ENCODE measurements at regions of chr15 and their contacts with region 1.

Region 1: DNA sequence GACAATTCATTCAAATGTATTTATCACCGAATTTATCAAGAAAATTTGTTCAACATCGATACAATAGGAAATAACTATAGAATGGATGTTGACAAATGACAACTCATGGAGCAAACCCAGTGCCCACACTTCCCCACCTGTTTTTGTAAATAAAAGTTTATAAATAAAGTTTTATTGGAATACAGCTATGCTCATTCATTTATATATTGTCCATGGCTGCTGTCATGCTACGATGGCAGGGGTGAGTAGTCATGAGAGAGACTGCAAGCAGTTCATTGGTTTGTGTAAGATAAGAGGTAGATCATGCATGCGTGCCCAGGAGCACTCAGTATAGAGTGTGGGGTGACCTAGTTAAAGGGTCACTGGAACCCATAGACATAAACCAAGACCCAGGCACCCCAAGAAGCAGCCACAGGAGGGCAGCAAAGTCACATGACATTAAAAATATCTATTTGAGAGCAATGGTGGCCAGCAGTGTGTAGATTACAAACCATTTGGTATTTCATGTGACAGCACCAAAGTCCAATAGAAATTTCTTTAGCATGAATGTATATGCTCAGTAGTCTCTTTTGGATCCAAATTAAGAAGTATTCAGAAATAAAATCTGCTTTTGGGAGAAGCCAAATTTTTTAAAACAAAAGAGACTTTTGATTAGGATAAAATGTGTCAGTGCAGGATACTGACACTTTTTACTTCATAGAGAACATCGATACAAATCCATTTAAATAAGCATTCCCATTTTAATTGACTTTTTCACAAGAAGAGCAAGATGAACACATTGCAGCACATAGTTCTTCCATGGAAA is 794.8 kb downstream of the MCTP2 start:
- DNase-seq: peak; percentile 50
- H3K4me3 ChIP-seq: no peak overlapping the region
- H3K27ac ChIP-seq: no peak overlapping the region
- H3K4me1 ChIP-seq: no peaks in the 10 kb centered on the region
- H3K27me3 ChIP-seq: no peaks in the 10 kb centered on the region
- CTCF ChIP-seq: peak; percentile 62 to 80

Region 2: DNA sequence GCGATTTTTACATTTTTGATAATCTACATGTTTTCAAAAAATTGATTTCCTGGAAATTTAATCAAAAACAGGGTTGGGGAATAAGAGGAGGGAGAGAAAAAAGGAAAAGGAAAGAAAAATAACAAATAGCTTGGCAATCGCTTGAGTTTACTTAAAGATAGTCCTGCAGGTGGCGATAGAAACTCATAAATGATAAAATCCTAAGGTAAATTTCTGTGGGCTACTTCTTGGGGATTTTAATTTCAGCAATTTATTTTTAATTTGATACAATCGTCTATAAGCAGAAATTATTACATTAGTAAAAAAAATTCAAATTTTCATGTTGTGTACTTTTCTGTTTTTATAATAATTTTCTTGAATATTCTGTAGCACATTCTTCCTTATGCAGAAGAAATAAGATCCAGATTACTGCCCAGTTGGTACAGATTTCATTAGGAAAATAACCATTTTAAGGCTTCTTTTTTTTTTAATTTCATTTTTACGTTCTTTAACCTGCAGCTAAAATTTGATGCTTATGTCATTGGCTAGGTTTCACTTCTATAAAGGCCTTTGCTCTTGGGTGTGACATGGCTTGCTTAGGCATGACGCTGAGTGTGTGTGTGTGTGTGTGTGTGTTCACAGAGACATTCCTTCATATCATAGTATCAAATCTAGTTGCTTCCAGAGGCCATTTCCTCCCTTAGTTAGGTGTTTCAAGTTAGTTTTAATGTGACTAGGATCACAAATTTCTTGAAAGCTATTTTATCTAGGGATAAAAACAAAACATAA is 613.0 kb before region 1 on chr15:
- CTCF ChIA-PET with region 1: no interaction called
- dilution Hi-C with region 1: no loop called
- in situ Hi-C with region 1: no loop called
- intact Hi-C with region 1: loop called (anchors 10 kb)
- DNase-seq: no peak
- H3K4me3 ChIP-seq: no peak overlapping the region
- H3K27ac ChIP-seq: no peak overlapping the region
- H3K4me1 ChIP-seq: no peaks in the 10 kb centered on the region
- H3K27me3 ChIP-seq: no peaks in the 10 kb centered on the region
- CTCF ChIP-seq: peak; percentile 37 to 46

Region 3: DNA sequence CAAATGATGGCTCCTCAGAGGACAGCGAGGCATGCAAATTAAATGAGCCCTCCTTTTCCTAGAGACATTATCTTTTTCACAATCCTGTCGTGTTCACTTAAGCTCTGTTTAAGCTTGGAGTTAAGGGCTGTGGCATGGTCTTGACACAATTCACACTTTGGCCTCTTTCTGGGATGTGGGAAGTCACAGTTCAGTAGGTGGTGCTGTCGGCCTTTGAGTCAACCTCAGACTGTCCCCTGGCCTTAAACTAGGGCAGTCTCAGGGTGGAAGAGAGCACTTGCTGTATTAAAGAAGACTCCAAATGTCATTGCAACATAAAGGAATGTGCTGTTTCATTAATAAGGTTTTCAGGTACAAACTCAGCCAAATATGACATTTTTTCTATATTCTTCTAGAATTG is 443.8 kb before region 1 on chr15:
- CTCF ChIA-PET with region 1: no interaction called
- dilution Hi-C with region 1: no loop called
- in situ Hi-C with region 1: no loop called
- intact Hi-C with region 1: loop called (anchors 10 kb)
- DNase-seq: peak; percentile 6
- H3K4me3 ChIP-seq: no peak overlapping the region
- H3K27ac ChIP-seq: no peak overlapping the region
- H3K4me1 ChIP-seq: no peaks in the 10 kb centered on the region
- H3K27me3 ChIP-seq: peaks cover 3% of the 10 kb centered on the region
- CTCF ChIP-seq: peak; percentile 37 to 49

Region 4: DNA sequence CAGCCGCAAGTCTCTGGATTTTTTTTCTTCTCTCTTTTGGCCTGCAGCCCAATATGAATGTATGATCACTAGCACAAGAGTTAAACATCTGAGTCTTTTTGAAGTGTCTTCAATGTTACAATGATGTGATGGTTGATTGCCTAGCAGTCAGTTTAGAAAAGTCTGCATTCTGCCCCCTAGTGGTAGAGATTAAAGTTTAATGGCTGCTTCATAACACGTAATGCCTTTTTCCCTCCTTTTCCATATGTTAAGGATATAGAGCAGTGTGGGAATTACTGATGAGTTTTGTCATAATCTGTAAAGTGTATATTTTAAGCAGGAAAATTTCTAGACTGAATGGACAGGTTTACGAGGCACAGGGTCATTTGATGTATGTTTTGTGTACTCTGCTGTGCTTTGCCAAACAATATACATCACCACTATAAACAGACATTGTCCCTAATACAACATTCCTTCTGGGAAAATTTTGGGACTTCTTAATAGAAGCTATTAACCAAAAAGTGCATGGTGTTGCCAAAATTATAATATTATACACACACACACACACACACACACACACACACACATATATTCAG is 265.9 kb after region 1 on chr15:
- CTCF ChIA-PET with region 1: no interaction called
- dilution Hi-C with region 1: no loop called
- in situ Hi-C with region 1: loop called in 1 of 2 experiments (anchors 25 kb)
- intact Hi-C with region 1: loop called (anchors 2 kb)
- DNase-seq: peak; percentile 27
- H3K4me3 ChIP-seq: no peak overlapping the region
- H3K27ac ChIP-seq: no peak overlapping the region
- H3K4me1 ChIP-seq: peaks cover 5% of the 10 kb centered on the region
- H3K27me3 ChIP-seq: no peaks in the 10 kb centered on the region
- CTCF ChIP-seq: peak; percentile 65

Region 5: DNA sequence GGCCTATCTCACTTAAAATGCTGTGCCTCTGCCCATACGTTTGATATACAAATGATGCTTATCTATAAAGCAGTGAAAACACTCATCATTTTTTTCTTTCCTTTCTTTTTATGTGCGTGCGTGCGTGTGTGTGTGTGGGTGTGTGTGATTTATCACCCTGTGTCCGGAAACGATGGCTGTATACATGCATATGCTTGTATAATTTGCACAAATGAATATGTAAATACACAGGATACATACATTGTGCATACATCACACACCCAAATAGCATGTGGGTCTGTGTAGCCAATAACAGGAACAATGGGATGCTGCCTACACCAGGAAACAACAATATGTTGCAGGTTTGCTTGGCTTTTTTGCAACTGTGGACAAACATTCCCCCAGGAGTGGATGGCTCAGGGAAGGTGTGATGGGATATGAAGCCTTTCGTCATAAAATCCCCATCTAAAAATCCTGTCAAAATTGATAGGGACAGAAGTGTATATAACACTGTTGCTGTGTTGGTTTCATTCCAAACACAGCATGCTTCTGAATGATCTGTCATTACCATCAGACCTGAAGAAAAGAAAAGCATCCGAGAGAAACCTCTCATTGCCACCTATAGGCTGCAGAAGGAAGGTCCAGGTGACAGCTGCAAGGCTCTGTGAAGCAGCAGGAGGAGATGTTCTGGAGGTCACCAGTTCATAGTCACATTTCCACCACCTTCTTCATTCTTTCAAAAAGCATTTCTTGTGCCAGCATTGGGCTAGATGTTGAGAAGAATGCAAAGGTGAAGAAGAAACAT is 800.5 kb after region 1 on chr15:
- CTCF ChIA-PET with region 1: no interaction called
- dilution Hi-C with region 1: no loop called
- in situ Hi-C with region 1: no loop called
- intact Hi-C with region 1: loop called (anchors 2 kb)
- DNase-seq: peak; percentile 26
- H3K4me3 ChIP-seq: no peak overlapping the region
- H3K27ac ChIP-seq: no peak overlapping the region
- H3K4me1 ChIP-seq: no peaks in the 10 kb centered on the region
- H3K27me3 ChIP-seq: peaks cover 3% of the 10 kb centered on the region
- CTCF ChIP-seq: peak; percentile 31 to 64

Region 6: GRCh38 chr15:96345560-96346399 is 1319.7 kb after region 1 on chr15:
- CTCF ChIA-PET with region 1: no interaction called
- dilution Hi-C with region 1: no loop called
- in situ Hi-C with region 1: loop called (anchors 10 to 25 kb)
- intact Hi-C with region 1: loop called (anchors 5 kb)
- DNase-seq: no peak
- H3K4me3 ChIP-seq: peak overlapping the region; percentile 30 to 47 (median 33)
- H3K27ac ChIP-seq: no peak overlapping the region
- H3K4me1 ChIP-seq: no peaks in the 10 kb centered on the region
- H3K27me3 ChIP-seq: no peaks in the 10 kb centered on the region
- CTCF ChIP-seq: peak; percentile 48 to 66

Region 7: DNA sequence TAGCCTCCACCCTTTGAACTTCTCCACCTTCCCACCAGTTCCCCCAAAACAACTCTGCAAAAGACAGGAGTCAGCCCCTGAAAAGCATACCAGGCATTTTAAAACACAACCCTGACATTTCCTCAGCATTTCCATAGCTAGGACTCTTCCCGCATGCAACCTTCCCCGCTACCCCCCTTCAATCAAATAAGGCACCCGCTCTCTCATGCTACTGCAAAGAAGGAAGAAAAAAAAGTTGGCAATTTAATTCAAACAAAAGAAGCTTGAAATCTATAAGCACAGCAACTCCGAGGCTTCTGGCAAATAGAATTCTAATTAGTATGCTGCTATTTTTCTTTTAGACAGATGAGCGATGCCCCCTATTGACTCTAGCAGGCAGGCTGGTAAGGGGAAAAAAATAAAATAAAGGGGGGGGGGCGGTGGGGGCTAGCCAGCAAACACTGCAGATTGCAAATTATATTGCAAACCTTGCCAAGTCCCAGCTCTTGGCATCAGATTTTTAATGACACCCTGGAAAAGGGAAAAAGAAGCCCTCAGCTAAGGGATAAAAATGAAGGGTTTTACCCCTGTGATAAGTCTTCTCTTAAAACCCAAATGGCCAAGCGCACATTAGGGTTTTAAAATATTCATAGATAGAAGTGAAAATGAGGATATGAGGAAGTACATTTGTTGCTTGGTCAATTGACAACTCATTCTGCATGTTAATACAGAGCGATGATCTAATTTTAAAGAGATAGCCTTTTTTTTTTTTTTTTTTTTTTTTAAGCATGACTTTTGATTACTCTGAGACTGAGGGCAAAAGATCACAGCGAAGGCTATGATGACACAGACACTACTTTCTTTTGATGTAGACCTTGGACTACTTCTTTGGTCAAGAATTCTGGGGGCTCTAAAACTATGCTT is 1559.6 kb after region 1 on chr15:
- CTCF ChIA-PET with region 1: no interaction called
- dilution Hi-C with region 1: no loop called
- in situ Hi-C with region 1: no loop called
- intact Hi-C with region 1: loop called (anchors 5 kb)
- DNase-seq: no peak
- H3K4me3 ChIP-seq: no peak overlapping the region
- H3K27ac ChIP-seq: no peak overlapping the region
- H3K4me1 ChIP-seq: no peaks in the 10 kb centered on the region
- H3K27me3 ChIP-seq: peaks cover 4% of the 10 kb centered on the region
- CTCF ChIP-seq: peak; percentile 12 to 39